ENCODE measurements at regions of chr11 and their contacts with region 1.

Region 1: GRCh38 chr11:31487848-31488247 is 21.6 kb downstream of the IMMP1L start:
- H3K4me3 Mint-ChIP-seq: no peak overlapping the region
- H3K27ac Mint-ChIP-seq: no peak overlapping the region
- H3K4me1 Mint-ChIP-seq: no peaks in the 10 kb centered on the region
- H3K27me3 Mint-ChIP-seq: no peaks in the 10 kb centered on the region

Region 2: DNA sequence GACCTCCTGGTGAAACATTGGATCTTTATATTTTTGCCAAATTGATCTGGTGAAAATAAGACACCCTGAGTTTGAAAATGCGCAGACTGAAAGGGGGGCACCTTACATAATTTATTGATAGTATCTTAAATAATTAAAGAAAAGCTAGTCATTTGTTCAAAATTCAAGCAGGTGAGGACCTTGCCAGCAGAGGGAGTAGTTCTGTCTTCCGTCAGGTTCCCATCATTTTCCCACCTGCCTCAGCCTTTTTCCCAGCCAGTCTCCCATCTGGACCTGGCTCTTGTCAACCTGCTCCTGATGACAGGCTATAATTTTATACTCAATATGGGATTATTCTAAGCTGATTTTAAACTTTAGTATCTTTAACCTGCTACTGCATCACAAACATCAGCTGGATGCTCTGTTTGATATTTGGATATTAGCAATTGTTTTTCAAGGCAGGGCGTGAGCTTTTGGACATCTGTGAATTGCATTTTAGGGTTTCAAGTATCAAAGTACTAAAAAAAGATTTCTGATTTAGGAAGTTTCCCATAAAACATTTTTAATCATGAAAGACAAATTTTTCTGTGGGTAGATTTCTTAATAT is 153.7 kb after region 1 on chr11:
- intact Hi-C with region 1: no loop called
- H3K4me3 Mint-ChIP-seq: no peak overlapping the region
- H3K27ac Mint-ChIP-seq: no peak overlapping the region
- H3K4me1 Mint-ChIP-seq: no peaks in the 10 kb centered on the region
- H3K27me3 Mint-ChIP-seq: no peaks in the 10 kb centered on the region

Region 3: DNA sequence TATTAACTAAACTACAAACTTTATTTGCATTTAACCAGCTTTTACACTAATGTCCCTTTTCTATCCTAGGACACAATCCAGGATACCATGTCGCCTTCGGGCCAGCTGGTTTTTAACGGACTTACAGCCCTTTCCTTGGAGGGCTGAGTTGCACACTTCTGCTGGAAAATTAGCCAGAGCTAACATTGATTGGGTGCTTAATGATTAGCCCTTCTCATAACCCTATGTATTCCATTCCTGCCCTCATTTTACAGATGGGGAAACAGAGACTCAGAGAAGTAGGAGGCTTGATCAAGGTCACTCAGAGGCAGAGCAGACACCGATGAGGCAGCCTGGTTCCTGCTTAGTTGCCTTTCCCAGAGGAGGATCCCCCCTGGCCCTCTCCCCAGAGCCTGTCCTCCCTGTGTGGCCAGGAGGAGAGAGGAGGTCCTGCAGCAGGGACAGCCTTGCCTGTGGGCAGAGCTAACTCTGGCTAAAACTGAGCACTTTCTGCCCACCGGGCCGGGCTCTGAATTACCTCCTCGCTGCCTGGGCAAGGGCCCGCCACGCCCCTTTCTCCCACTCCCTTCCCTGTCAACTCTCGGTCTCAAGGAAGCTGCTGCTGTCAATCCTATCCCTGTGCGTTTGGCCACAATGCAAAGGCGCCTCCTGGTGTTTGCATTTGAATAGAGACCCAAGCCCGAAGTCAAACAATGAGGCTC is 382.9 kb after region 1 on chr11:
- intact Hi-C with region 1: loop called (anchors 5 kb)
- H3K4me3 Mint-ChIP-seq: no peak overlapping the region
- H3K27ac Mint-ChIP-seq: no peak overlapping the region
- H3K4me1 Mint-ChIP-seq: no peaks in the 10 kb centered on the region
- H3K27me3 Mint-ChIP-seq: peaks cover 16% of the 10 kb centered on the region

Region 4: GRCh38 chr11:31958076-31958735 is 470.4 kb after region 1 on chr11:
- intact Hi-C with region 1: loop called (anchors 5 kb)
- H3K4me3 Mint-ChIP-seq: no peak overlapping the region
- H3K27ac Mint-ChIP-seq: no peak overlapping the region
- H3K4me1 Mint-ChIP-seq: no peaks in the 10 kb centered on the region
- H3K27me3 Mint-ChIP-seq: peaks cover 6% of the 10 kb centered on the region

Region 5: GRCh38 chr11:32176223-32176934 is 688.5 kb after region 1 on chr11:
- intact Hi-C with region 1: loop called (anchors 2 kb)
- H3K4me3 Mint-ChIP-seq: no peak overlapping the region
- H3K27ac Mint-ChIP-seq: no peak overlapping the region
- H3K4me1 Mint-ChIP-seq: no peaks in the 10 kb centered on the region
- H3K27me3 Mint-ChIP-seq: peaks cover 10% of the 10 kb centered on the region

Measured in dendritic cell treated with granulocyte-macrophage colony-stimulating factor and Interleukin-4, amounts not matched to agents 40 ng/mL and 50 ng/mL, for 4 days (primary cell).